Activated CD8-positive, alpha-beta T cell treated with anti-CD3 and anti-CD28 coated beads for 36 hours (primary cell): ENCODE measurements at regions of chr4 and their contacts with region 1.

Region 1: GRCh38 chr4:154551872-154552686 is 1.9 kb upstream of the PLRG1 start:
- DNase-seq: peak; percentile 81
- ATAC-seq: peak; percentile 50
- H3K4me3 Mint-ChIP-seq: no peak overlapping the region
- H3K27ac Mint-ChIP-seq: no peak overlapping the region
- H3K4me1 Mint-ChIP-seq: peaks cover 17% of the 10 kb centered on the region
- H3K27me3 Mint-ChIP-seq: peaks cover 1% of the 10 kb centered on the region
- CTCF ChIP-seq: peak; percentile 86

Region 2: DNA sequence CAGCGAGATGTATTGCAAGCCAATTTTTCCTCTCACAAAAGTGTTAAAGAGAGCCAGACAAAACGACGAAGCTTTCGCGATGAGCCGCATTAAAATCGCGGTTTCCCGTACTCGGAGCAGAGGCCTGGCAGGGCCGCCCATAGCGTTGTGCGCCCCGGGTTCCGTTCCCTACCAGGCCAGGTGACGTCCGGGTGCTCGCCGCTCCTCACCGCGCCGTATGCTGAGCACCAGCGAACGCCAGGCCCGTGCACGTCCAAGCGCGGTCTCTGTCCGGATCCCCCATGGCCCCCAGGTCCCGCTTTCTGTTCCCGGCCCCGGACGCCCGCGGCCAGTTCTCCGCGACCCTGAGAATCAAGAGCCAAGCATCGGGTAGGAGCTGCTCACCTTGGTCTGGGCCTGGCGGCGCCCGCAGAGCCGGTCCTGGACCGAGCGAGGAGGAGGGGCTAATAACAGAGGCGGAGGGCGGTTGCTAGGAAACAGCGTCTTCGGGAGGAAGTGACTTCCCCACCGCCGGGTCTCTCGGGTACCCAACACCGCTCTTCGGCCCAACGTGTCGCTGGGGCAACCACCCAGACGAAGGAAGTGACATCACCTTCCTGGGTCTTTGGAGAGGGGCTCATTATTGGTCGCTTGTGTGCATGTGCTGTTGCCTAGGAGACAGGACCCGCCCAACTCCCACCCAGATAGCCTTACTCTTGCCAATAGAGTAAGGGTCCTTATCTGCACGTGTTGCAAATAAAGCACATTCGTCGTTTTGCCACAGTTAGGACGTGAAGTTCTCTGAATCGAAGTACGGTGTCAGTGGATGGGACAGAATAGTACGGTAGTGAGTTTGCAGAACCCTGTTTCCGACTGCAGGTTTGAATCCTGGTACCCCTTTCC is 824.5 kb after region 1 on chr4 and contains the start of gene MAP9:
- CTCF ChIA-PET with region 1: interaction called, 6 read pairs
- POLR2A ChIA-PET with region 1: no interaction called
- intact Hi-C with region 1: loop called (anchors 10 kb)
- DNase-seq: peak; percentile 95
- ATAC-seq: peak; percentile 95
- H3K4me3 Mint-ChIP-seq: peak within 1 kb of the TSS; percentile 82
- H3K27ac Mint-ChIP-seq: peak within 1 kb of the TSS; percentile 90
- H3K4me1 Mint-ChIP-seq: peaks cover 18% of the 10 kb centered on the region
- H3K27me3 Mint-ChIP-seq: no peaks in the 10 kb centered on the region
- CTCF ChIP-seq: no peak
- total RNA-seq, gene MAP9: 8.3 to 8.4 TPM